CD4-positive, alpha-beta T cell (primary cell): ENCODE measurements at regions of chr1 and their contacts with region 1.

Region 1: GRCh38 chr1:63522891-63523728 is at the starts of genes EFCAB7 and ITGB3BP:
- DNase-seq: peak; percentile 66 to 91 (median 75)
- ATAC-seq: peak; percentile 85
- H3K4me3 ChIP-seq: peak within 1 kb of the TSS; percentile 79
- H3K4me3 Mint-ChIP-seq: peak within 1 kb of the TSS; percentile 91
- H3K27ac ChIP-seq: peak within 1 kb of the TSS; percentile 68 to 86
- H3K27ac Mint-ChIP-seq: peak within 1 kb of the TSS; percentile 95
- H3K4me1 ChIP-seq: peaks cover 13% of the 10 kb centered on the region
- H3K4me1 Mint-ChIP-seq: peaks cover 47% of the 10 kb centered on the region
- H3K27me3 ChIP-seq: no peaks in the 10 kb centered on the region
- H3K27me3 Mint-ChIP-seq: no peaks in the 10 kb centered on the region
- CTCF ChIP-seq: no peak
- total RNA-seq, gene EFCAB7: 5.7 to 8.9 TPM
- total RNA-seq, gene ITGB3BP: 8.3 to 9.3 TPM

Region 2: DNA sequence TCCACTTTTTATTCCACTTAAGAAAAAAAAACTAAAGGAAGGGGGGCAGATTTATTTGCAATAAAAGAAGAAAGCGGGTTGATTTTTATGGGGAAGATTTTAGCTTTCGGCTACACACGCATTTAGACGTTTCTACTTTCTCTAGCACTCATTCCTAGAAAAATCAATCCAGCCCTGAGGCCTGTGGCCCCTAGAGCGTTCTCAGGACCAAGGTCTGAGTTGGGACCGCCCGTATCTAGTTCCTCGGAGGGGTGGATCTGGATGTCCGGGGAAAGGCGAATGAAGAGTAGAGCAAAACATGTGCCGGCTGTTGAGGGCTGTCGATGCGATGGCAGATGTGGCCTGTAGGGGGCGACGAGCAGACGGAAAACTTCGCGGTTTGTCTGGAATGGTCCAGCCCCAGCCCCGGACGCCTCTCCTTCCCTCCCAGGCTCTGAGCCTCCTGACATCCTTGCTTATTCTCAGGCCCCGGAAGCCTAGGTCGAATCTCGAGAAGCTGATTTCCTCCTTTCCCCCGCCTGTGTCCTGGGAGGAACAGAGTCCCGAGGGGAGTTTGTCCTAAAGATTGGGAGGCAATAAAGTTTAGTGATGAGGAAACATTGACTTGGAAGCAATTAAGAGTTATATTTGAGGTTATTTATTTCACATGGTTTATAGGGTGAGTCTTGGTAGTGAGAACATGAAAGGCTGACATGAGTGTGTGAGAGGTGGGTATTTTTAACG is 195.5 kb before region 1 on chr1:
- CTCF ChIA-PET with region 1: no interaction called
- POLR2A ChIA-PET with region 1: no interaction called
- intact Hi-C with region 1: loop called in 1 of 2 experiments (anchors 5 kb)
- DNase-seq: peak in 4 of 14 experiments; percentile 29 to 67 (median 49)
- ATAC-seq: peak; percentile 24
- H3K4me3 ChIP-seq: no peak overlapping the region
- H3K4me3 Mint-ChIP-seq: peak overlapping the region; percentile 23
- H3K27ac ChIP-seq: no peak overlapping the region
- H3K27ac Mint-ChIP-seq: no peak overlapping the region
- H3K4me1 ChIP-seq: peaks cover 43% of the 10 kb centered on the region
- H3K4me1 Mint-ChIP-seq: peaks cover 31% of the 10 kb centered on the region
- H3K27me3 ChIP-seq: peaks cover 69 to 92% of the 10 kb centered on the region in 2 experiments
- H3K27me3 Mint-ChIP-seq: peaks cover 83% of the 10 kb centered on the region
- CTCF ChIP-seq: peak; percentile 35

Region 3: DNA sequence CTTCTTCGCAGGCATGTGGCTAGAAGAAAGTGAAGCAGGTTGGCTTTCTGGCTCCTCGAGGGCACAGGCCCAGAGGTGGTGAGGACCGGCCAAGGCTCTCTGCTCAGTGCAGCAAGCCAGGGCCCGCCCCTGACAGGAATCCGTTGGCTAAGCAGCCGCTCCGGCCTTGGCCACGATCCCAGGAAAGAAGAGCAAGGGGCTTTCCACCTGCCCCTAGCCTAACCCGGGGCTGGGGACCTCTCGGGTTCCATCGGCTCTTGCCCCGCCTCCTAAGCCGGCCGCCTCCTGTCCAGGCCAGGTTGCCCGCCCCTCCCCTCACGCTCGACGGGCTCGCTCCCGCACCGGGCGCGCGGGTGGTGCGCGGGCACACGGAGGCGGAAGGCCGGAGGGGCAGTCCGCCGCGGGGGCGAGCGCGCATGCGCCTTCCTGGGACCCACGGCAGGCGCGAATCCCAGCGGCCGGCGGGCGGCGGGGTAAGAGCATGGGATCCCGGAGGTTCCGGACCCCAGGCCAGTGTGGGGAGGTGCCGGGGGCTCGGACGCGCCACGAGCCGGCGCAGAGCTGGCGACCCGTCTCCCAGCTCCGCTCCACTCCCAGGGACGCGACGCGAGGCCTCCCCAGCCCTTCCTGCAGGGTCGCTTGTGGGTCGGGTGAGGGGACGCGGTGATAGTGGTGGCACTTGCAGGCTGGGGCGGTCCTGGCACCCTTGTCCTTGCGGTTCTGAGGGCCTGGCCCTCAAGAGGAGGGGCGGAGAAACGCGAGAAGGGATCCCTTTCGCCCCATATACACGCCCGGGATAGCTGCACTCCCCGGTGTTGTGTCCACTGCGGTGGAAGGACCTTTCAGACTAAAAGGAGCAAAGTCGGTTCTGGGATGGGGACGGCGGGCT is 155.7 kb before region 1 on chr1 and contains the start of gene ALG6:
- CTCF ChIA-PET with region 1: no interaction called
- POLR2A ChIA-PET with region 1: no interaction called
- intact Hi-C with region 1: loop called in 1 of 2 experiments (anchors 1 kb)
- DNase-seq: peak; percentile 64 to 94 (median 88)
- ATAC-seq: peak; percentile 79
- H3K4me3 ChIP-seq: peak within 1 kb of the TSS; percentile 98
- H3K4me3 Mint-ChIP-seq: peak within 1 kb of the TSS; percentile 97
- H3K27ac ChIP-seq: peak within 1 kb of the TSS; percentile 52 to 60
- H3K27ac Mint-ChIP-seq: peak within 1 kb of the TSS; percentile 87
- H3K4me1 ChIP-seq: peaks cover 20% of the 10 kb centered on the region
- H3K4me1 Mint-ChIP-seq: peaks cover 34% of the 10 kb centered on the region
- H3K27me3 ChIP-seq: peaks cover 0 to 2% of the 10 kb centered on the region in 2 experiments
- H3K27me3 Mint-ChIP-seq: peaks cover 7% of the 10 kb centered on the region
- CTCF ChIP-seq: peak; percentile 12
- total RNA-seq, gene ALG6: 10.6 to 11.2 TPM

Region 4: DNA sequence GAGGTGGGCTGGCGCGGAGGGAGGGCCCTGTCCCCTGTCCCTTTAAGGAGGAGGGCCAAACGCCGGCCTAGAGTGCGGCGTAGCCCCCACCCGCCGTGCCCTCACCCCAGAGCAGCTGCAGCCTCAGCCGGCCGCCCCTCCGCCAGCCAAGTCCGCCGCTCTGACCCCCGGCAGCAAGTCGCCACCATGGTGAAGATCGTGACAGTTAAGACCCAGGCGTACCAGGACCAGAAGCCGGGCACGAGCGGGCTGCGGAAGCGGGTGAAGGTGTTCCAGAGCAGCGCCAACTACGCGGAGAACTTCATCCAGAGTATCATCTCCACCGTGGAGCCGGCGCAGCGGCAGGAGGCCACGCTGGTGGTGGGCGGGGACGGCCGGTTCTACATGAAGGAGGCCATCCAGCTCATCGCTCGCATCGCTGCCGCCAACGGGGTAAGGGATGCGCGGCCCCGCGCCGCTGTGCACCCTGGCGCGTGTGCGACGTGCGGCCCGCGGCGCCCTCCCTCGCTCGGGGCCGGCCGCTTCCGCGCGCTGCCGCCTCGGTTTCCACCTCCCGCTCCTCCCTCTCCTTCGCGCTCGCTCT is 70.3 kb after region 1 on chr1 and contains the start of gene PGM1:
- CTCF ChIA-PET with region 1: no interaction called
- POLR2A ChIA-PET with region 1: interaction called, 5 read pairs
- intact Hi-C with region 1: loop called in 1 of 2 experiments (anchors 2 kb)
- DNase-seq: peak; percentile 55 to 91 (median 73)
- ATAC-seq: peak; percentile 77
- H3K4me3 ChIP-seq: peak within 1 kb of the TSS; percentile 87
- H3K4me3 Mint-ChIP-seq: peak within 1 kb of the TSS; percentile 99
- H3K27ac ChIP-seq: peak within 1 kb of the TSS; percentile 82 to 87
- H3K27ac Mint-ChIP-seq: peak within 1 kb of the TSS; percentile 99
- H3K4me1 ChIP-seq: peaks cover 21% of the 10 kb centered on the region
- H3K4me1 Mint-ChIP-seq: peaks cover 45% of the 10 kb centered on the region
- H3K27me3 ChIP-seq: no peaks in the 10 kb centered on the region
- H3K27me3 Mint-ChIP-seq: no peaks in the 10 kb centered on the region
- CTCF ChIP-seq: no peak
- total RNA-seq, gene PGM1: 5.4 to 5.6 TPM